ENCODE measurements at regions of chr3 and their contacts with region 1.

Region 1: DNA sequence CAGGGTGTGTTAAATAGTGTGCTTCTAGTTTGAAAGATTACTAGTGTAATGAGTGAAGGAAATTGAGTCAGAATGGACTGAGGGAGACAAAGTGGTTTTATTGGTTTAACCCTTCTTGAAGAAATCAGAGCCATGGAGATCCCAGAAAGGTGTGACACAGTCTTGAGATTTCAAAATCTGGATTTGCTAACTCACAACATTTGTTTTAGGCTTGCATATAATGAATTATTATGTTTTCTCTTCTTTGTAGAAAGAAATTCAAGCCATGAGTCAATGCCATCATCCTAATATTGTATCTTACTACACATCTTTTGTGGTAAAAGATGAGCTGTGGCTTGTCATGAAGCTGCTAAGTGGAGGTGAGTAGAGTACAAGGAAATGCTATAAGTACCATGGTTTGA is 25.1 kb downstream of the OXSR1 start:
- DNase-seq: no peak
- ATAC-seq: no peak
- H3K4me3 ChIP-seq: no peak overlapping the region
- H3K4me3 Mint-ChIP-seq: no peak overlapping the region
- H3K27ac ChIP-seq: no peak overlapping the region
- H3K27ac Mint-ChIP-seq: no peak overlapping the region
- H3K4me1 ChIP-seq: no peaks in the 10 kb centered on the region
- H3K4me1 Mint-ChIP-seq: peaks cover 0 to 10% (median 3%) of the 10 kb centered on the region in 7 donors
- H3K27me3 ChIP-seq: no peaks in the 10 kb centered on the region
- H3K27me3 Mint-ChIP-seq: no peaks in the 10 kb centered on the region

Region 2: DNA sequence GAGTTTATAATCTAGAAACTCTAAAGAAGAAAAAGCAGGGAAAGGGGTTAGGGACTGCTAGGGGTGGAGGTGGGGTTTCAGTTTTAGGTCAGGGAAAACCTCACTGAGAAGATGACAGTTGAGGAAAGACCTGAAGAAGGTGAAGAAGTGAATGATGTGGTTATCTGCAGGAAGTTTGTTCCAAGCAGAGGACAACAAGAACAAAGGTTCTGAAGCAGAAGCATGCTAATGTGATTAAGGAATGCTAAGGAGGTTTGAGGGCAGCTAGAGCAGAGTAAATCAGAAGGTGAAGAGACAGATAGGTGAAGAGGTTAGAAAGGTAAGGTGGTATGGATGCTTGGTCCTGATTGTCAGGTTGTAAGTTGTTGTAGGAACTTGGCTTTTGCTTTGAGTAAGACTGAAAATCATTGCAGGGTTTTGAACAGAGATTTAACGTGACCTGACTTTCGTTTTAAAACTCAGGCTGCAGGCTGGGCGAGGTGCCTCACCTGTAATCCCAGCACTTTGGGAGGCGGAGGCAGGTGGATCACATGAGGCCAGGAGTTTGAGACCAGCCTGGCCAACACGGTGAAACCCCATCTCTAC is 16.6 kb before region 1 on chr3:
- CTCF ChIA-PET with region 1: no interaction called
- POLR2A ChIA-PET with region 1: interaction called, 7 read pairs
- intact Hi-C with region 1: loop called in 1 of 2 experiments (anchors 2 kb)
- DNase-seq: no peak
- ATAC-seq: peak; percentile 40
- H3K4me3 ChIP-seq: no peak overlapping the region
- H3K4me3 Mint-ChIP-seq: peak overlapping the region in 9 of 10 donors; percentile 1 to 79 (median 47)
- H3K27ac ChIP-seq: no peak overlapping the region
- H3K27ac Mint-ChIP-seq: peak overlapping the region in 7 of 9 donors; percentile 3 to 59 (median 18)
- H3K4me1 ChIP-seq: peaks cover 13 to 24% of the 10 kb centered on the region in 2 donors
- H3K4me1 Mint-ChIP-seq: peaks cover 54 to 80% (median 63%) of the 10 kb centered on the region in 7 donors
- H3K27me3 ChIP-seq: no peaks in the 10 kb centered on the region
- H3K27me3 Mint-ChIP-seq: no peaks in the 10 kb centered on the region

Region 3: GRCh38 chr3:38247366-38248035 is 57.0 kb after region 1 on chr3:
- CTCF ChIA-PET with region 1: no interaction called
- POLR2A ChIA-PET with region 1: no interaction called
- intact Hi-C with region 1: loop called in 1 of 2 experiments (anchors 5 kb)
- DNase-seq: no peak
- ATAC-seq: no peak
- H3K4me3 ChIP-seq: no peak overlapping the region
- H3K4me3 Mint-ChIP-seq: no peak overlapping the region
- H3K27ac ChIP-seq: no peak overlapping the region
- H3K27ac Mint-ChIP-seq: peak overlapping the region in 2 of 9 donors; percentile 55 to 91
- H3K4me1 ChIP-seq: no peaks in the 10 kb centered on the region
- H3K4me1 Mint-ChIP-seq: peaks cover 0 to 6% (median 0%) of the 10 kb centered on the region in 7 donors
- H3K27me3 ChIP-seq: no peaks in the 10 kb centered on the region
- H3K27me3 Mint-ChIP-seq: no peaks in the 10 kb centered on the region

Region 4: DNA sequence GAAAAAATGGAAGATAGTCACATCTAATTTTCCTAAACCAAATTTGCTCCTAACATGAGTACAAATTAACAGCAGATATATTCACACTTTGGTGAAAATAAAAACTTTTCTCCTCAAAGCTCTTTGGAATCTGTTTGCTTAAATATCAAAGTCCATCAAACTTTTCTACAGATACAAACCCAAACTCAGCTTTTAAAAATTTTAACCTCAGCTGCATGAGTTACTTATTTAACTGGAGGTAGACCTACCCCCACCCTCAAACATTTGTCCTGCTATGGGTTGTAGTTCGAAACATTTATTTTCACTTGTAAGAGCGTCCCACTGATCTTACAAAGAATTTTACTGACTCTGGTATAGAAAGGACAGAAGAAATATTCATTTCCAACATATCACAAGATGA is 147.2 kb after region 1 on chr3:
- CTCF ChIA-PET with region 1: no interaction called
- POLR2A ChIA-PET with region 1: no interaction called
- intact Hi-C with region 1: no loop called
- DNase-seq: no peak
- ATAC-seq: no peak
- H3K4me3 ChIP-seq: no peak overlapping the region
- H3K4me3 Mint-ChIP-seq: no peak overlapping the region
- H3K27ac ChIP-seq: no peak overlapping the region
- H3K27ac Mint-ChIP-seq: no peak overlapping the region
- H3K4me1 ChIP-seq: no peaks in the 10 kb centered on the region
- H3K4me1 Mint-ChIP-seq: no peaks in the 10 kb centered on the region
- H3K27me3 ChIP-seq: no peaks in the 10 kb centered on the region
- H3K27me3 Mint-ChIP-seq: peaks cover 0 to 17% (median 11%) of the 10 kb centered on the region in 5 donors